ENCODE measurements at regions of chr4 and their contacts with region 1.

Region 1: DNA sequence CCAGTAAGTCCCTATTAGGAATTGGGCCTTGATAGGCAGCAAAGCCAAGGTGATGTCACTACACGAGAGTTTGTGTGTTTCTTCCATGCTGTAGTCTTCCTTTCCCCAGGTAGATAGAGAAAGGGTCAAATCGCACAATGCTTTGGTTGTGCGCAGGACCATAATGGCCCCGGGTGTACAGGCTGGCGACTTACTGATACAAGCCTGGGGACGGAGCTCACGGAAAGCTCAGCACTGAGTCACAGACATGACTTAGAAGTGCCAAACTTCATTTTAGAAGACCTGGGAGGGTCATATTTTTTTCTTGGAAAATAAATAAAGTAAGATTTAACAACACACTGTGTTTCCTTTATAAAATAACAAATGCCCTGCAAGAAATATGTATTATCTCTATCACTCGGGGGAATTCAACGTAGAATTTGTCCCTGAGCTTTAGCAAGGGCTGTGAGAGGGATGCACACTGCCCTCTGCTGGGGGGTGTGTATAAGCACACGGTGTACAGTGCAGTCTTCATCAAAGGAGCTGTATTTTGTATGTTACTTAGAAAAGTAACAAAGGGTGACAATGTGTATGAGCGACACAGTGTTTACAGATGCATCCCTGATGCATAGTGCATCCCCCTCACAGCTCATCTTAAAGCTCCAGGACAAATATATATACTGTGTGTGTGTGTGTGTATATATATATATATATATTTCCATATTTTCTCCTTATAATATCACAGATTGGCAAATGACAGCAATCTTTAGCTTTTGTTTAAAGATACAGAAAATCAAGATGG is 254.5 kb upstream of the VEGFC start:
- DNase-seq: peak; percentile 25
- H3K4me3 Mint-ChIP-seq: no peak overlapping the region
- H3K27ac Mint-ChIP-seq: no peak overlapping the region
- H3K4me1 Mint-ChIP-seq: no peaks in the 10 kb centered on the region
- H3K27me3 Mint-ChIP-seq: peaks cover 6% of the 10 kb centered on the region

Region 2: DNA sequence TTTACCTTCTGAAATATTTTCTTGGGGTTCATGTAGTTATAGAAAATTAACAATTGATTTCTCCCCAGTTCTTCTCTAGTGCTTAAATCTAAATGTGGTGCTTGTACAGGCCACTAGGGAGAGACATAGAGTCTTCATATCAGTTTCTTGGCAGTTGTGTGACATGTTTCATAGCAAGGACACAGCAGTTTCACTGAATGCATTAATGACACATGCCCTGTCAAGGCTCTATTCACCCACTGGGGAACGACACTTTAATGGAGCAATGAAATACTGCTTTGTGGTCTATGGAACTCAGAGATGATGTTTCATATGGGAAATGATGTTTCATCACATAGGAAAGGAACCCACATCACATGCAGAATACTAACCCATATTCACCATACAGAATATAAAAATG is 257.3 kb before region 1 on chr4:
- intact Hi-C with region 1: loop called (anchors 1 kb)
- DNase-seq: no peak
- H3K4me3 Mint-ChIP-seq: no peak overlapping the region
- H3K27ac Mint-ChIP-seq: no peak overlapping the region
- H3K4me1 Mint-ChIP-seq: no peaks in the 10 kb centered on the region
- H3K27me3 Mint-ChIP-seq: peaks cover 41% of the 10 kb centered on the region

Measured in activated T-helper 1 cell treated with anti-CD3 and anti-CD28 coated beads, Interleukin-12 subunit alpha, Interleukin-12 subunit beta, Interleukin-2, Interleukin-4 antibody, amounts not matched to agents 30 ng/mL and 10 ng/mL and 1 ng/mL, durations not matched to agents 14 hours and 24 hours and 36 hours (primary cell).